AG04449 (cell line): ENCODE measurements at regions of chr3 and their contacts with region 1.

Region 1: GRCh38 chr3:72265256-72266015 is 480.5 kb upstream of the PROK2 start:
- DNase-seq: no peak
- H3K4me3 ChIP-seq: no peak overlapping the region
- CTCF ChIP-seq: peak; percentile 33

Region 2: GRCh38 chr3:71725279-71725991 is 540.0 kb before region 1 on chr3 and contains the start of gene EIF4E3:
- CTCF ChIA-PET with region 1: interaction called, 18 read pairs
- POLR2A ChIA-PET with region 1: no interaction called
- DNase-seq: no peak
- H3K4me3 ChIP-seq: peak within 1 kb of the TSS; percentile 69
- CTCF ChIP-seq: no peak

Region 3: DNA sequence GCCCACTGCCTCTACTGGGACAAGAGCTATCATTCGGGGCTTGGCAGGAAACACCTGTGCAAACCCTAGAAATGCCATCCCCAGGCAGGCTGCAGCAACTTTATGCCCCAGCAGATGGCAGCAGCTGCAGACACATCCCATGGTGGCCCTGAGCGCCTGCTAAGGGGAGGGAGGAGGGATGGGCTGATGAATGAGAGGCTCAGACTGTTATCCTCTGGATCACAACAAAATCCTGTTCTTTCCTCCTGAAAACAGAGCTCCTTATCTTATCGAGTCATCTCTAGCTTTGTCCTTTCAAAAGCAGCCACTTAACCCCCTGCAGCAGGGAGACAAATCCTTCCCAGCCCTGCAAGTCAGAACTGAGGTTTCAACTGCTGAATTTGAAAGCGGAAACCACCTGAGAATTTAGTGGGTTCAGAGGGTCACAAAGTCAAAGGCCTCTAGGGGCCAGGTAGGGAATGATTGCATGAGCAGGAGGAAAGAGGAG is 389.9 kb before region 1 on chr3:
- CTCF ChIA-PET with region 1: interaction called, 107 read pairs
- POLR2A ChIA-PET with region 1: no interaction called
- DNase-seq: peak; percentile 2
- H3K4me3 ChIP-seq: no peak overlapping the region
- CTCF ChIP-seq: peak; percentile 95

Region 4: GRCh38 chr3:71955240-71956068 is 310.0 kb before region 1 on chr3:
- CTCF ChIA-PET with region 1: interaction called, 26 read pairs
- POLR2A ChIA-PET with region 1: no interaction called
- DNase-seq: peak; percentile 47
- H3K4me3 ChIP-seq: no peak overlapping the region
- CTCF ChIP-seq: peak; percentile 76

Region 5: GRCh38 chr3:71984843-71985613 is 280.4 kb before region 1 on chr3:
- CTCF ChIA-PET with region 1: interaction called, 26 read pairs
- POLR2A ChIA-PET with region 1: no interaction called
- DNase-seq: no peak
- H3K4me3 ChIP-seq: no peak overlapping the region
- CTCF ChIP-seq: no peak

Region 6: GRCh38 chr3:72163809-72164634 is 101.4 kb before region 1 on chr3:
- CTCF ChIA-PET with region 1: no interaction called
- POLR2A ChIA-PET with region 1: no interaction called
- DNase-seq: no peak
- H3K4me3 ChIP-seq: no peak overlapping the region
- CTCF ChIP-seq: no peak

Region 7: DNA sequence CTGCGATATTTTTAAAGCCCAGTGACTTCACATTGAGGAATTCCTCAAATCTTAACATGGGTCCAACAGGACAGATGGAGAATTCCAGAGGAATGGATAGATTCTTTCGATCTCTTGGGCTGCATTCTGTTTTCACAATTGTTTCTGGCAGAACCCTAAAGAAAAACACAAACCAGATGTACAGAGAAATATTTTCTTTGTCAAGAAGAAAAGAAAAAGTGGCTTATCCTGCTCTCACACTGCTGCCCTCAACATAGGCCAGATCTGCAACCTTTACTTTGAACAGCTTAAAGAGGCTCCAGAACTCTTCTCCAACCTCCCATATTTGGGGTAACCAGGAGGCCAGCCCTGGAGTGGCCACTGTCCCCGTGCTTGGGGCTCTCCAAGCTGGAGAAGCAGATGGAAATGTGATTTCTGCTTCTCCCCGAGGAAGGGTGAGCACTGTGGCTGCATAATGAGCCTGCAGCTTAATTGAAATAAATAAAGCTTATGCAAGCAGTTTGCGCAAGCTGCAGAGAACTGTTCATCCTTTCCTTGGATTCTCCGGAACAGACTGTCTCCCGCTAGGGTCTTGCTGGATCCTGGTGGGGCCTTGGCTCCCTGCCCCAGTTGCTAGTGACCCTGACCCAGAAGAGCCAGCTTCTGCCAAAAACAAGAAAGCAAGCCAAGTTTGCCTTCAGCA is 27.3 kb before region 1 on chr3:
- CTCF ChIA-PET with region 1: no interaction called
- POLR2A ChIA-PET with region 1: no interaction called
- DNase-seq: no peak
- H3K4me3 ChIP-seq: no peak overlapping the region
- CTCF ChIP-seq: no peak